Posterior cingulate gyrus (tissue), 11 donors: ENCODE measurements at regions of chr12 and their contacts with region 1.

Region 1: DNA sequence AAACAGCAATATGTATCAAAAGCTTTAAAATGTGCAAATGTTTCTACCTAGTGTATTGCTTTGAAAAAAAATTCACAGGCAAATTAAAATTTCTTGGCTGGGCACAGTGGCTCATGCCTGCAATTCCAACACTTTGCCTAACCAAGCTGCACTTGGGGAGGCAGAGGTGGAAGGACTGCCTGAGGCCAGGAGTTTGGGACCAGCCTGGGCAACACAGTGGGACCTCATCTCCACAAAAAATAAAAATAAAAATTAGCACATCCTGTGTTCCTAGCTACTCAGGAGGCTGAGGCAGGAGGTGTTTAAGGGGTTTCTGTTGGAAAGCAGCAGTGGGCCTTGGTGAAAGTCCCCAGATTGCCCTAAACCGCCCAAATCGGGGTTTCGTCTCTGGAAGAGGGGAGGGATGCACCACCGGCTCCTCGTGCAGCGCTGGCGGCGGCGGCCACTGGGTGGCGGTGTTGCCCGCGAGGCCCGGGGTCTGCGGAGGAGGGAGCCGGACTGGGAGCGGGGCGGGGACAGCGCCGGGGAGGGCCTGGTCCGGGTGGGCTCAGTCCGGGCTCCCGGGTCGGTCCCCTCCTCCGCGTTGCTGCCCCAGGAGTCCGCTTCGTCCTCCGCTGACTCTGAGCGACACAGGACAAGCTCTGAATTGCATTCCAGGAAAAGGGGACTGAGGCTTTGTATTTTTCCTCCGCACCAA is 265.6 kb downstream of the AACS start:
- DNase-seq: peak; percentile 71 to 97 (median 88)

Region 2: GRCh38 chr12:124863416-124864325 is 467.1 kb before region 1 on chr12 and contains the start of gene SCARB1:
- intact Hi-C with region 1: no loop called
- DNase-seq: peak; percentile 67 to 98 (median 86)

Region 3: DNA sequence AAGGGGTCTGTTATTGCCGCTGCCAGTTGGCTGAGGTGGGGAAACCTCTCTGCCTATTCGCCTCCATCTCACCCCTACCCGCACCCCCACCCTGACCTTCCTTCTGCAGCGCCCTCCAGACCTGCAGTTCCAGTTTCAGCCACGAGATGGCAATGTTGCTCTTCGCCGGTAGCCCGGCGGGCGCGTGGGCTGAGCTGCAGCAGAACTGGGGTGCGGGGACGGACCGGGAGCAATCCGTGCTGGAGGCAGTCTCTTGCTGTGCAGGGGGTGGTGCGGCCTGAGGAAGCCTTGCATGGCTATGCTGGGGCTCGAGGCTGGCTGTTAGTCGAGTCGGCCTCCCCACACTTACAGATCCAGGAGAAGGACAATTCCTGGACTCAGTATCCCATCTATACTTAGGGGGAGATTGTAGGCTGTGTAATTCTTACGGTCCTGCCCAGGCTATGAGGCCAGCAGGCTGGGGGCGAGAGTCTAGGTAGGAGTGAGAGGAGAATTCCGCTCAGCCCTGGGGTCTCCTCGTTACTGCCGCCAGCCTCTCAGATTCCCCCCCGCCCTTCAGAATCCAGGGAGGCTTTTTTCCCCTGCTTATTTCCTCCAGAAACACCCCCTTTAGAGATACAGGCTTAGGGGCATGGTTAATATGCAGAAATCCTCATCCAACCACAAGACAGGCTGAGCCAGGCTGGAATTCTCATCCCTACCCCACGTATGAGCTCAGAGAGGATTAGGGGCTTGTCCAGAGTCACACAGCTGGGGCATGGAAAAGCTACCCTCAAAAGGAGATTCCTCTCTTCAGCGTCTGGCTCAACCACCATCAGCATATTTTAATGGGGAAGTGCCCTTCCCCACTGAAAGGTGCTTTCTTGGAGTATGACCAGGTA is 147.4 kb before region 1 on chr12:
- intact Hi-C with region 1: loop called (anchors 5 kb)
- DNase-seq: peak; percentile 89 to 99 (median 92)

Region 4: DNA sequence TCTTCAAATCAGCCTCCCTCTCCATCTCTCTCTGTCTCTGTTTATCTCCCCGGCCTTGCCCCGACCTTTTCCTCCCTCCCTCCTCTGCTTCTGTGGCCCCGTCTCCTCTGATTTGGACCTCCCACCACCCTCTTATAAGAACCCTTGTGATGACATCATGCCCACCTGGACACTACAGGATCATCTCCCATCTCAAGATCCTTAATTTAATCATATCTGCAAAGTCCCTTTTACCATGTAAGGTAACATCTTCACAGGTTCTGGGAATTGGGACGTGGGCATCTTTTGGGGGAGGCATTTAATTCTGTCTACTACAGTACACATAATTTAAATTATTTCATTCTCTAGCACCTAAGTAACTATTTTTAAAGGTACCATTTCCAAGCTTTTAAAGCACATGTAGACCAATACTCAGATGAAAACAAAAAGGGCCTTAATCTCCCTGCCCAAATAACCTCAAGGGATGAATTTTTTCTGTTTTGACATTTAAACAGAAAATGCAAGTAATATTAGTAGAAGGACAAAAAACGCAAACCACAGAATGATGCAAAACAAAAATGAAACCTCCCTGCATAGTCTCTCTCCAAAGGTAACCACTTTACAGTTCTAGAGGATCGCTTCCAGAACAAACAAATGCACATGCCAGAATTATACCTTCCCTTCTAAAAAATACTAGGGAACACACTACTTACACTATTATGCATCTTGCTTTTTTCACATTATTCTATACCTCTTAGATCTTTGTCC is 43.5 kb before region 1 on chr12:
- intact Hi-C with region 1: no loop called
- DNase-seq: peak in 1 of 10 donors; percentile 3

Region 5: GRCh38 chr12:125402874-125403789 is 72.3 kb after region 1 on chr12:
- intact Hi-C with region 1: loop called (anchors 2 kb)
- DNase-seq: no peak

Region 6: GRCh38 chr12:125538401-125539199 is 207.8 kb after region 1 on chr12:
- intact Hi-C with region 1: loop called (anchors 5 kb)
- DNase-seq: peak in 2 of 10 donors; percentile 40 to 84

Region 7: GRCh38 chr12:125683748-125684381 is 353.1 kb after region 1 on chr12:
- intact Hi-C with region 1: loop called (anchors 10 kb)
- DNase-seq: peak in 7 of 10 donors; percentile 42 to 93 (median 54)

Region 8: DNA sequence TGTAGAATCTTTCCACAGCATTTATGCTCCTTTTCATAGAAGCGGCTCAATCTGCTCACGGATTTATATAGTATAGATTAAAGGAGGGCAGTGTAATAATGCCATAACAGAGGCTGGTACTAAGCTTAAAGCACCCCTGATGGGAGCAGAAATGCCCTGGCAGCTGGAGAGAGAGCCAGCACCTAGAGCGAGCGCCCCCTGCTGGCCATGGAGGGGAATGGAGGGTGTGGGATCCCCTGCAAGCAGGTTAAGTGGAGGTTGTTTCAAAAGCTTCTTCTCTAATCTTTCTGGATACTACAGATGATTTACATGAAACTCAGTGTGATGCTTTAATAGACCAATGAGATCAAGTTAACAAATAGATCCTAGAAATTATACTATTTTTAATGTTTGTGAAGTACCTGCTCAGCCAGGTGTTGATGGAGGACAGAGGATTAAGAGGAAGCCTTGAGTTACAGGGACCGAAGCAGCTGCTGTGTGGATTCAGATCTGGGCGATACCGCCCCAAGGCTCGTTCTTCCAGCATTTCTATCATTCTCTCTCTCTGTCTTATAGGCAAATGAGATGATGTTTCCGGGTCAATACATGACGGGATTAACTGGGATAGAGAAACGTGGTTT is 1416.8 kb after region 1 on chr12:
- intact Hi-C with region 1: loop called (anchors 2 kb)
- DNase-seq: peak in 9 of 10 donors; percentile 33 to 94 (median 59)

Region 9: GRCh38 chr12:126874427-126875026 is 1543.7 kb after region 1 on chr12:
- intact Hi-C with region 1: loop called (anchors 5 kb)
- DNase-seq: peak; percentile 68 to 96 (median 80)